ENCODE measurements at regions of chr13 and their contacts with region 1.

Region 1: GRCh38 chr13:92418818-92419412 is 807.7 kb upstream of the GPC6 start:
- DNase-seq: no peak

Region 2: DNA sequence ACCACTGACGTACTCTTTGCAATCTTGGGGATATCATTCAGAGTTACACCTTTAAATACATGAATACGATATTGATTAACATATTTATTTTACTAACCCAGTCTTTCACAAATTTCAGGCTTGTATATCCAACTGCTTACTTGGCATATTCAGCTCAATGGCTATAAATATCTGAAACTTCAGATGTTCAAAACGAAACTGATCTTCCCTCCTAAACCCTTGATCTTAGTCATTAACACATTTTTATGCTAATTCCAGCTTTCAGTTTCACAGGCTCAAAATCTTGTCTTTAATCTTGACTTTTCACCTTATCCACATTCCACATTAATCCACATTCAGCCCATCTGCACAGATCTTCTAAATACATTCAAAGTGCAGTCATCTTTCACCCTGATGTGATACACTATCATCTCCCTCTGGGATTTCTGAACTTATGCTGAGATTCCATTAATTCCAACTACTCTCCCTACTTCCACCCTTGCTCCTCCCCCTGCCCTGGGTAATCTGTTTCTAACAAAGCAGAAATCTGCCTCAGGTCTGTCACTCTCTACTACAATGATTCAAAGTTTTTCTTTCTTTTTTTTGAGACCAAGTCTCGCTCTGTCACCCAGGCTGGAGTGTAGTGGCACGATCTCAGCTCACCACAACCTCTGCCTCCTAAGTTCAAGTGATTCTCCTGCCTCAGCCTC is 633.3 kb before region 1 on chr13:
- intact Hi-C with region 1: no loop called
- DNase-seq: no peak

Region 3: GRCh38 chr13:91965511-91965910 is 453.4 kb before region 1 on chr13:
- intact Hi-C with region 1: loop called in 1 of 2 experiments (anchors 5 kb)
- DNase-seq: no peak

Region 4: DNA sequence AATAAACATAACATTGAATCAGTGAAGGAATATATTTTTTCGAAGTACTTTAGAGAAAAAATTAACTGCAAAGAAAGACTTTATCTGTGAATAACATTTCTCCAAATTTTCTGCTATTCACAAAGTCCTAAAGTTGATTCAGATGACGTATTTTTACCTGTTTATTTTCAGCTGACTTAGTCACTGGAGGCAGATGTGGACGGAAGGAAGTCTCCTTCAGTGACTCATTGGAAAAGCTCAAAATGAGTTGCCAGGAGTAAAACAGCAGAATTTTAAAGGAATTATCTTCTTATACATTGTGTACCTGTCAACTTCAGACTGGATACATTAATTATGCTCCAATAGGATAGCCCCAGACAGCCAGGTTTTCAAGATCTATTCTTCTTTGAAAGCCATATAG is 128.4 kb after region 1 on chr13:
- intact Hi-C with region 1: no loop called
- DNase-seq: no peak